OCI-LY7 (cell line): ENCODE measurements at regions of chr9 and their contacts with region 1.

Region 1: GRCh38 chr9:105157130-105157583 is 87.3 kb upstream of the SLC44A1 start:
- DNase-seq: peak; percentile 76
- H3K4me3 ChIP-seq: no peak overlapping the region
- H3K27ac ChIP-seq: no peak overlapping the region
- H3K4me1 ChIP-seq: peaks cover 3% of the 10 kb centered on the region
- CTCF ChIP-seq: peak; percentile 87

Region 2: GRCh38 chr9:104780799-104781395 is 376.3 kb before region 1 on chr9:
- CTCF ChIA-PET with region 1: no interaction called
- POLR2A ChIA-PET with region 1: no interaction called
- intact Hi-C with region 1: loop called (anchors 1 kb)
- DNase-seq: peak; percentile 54
- H3K4me3 ChIP-seq: no peak overlapping the region
- H3K27ac ChIP-seq: no peak overlapping the region
- H3K4me1 ChIP-seq: peaks cover 24% of the 10 kb centered on the region
- CTCF ChIP-seq: peak; percentile 90

Region 3: DNA sequence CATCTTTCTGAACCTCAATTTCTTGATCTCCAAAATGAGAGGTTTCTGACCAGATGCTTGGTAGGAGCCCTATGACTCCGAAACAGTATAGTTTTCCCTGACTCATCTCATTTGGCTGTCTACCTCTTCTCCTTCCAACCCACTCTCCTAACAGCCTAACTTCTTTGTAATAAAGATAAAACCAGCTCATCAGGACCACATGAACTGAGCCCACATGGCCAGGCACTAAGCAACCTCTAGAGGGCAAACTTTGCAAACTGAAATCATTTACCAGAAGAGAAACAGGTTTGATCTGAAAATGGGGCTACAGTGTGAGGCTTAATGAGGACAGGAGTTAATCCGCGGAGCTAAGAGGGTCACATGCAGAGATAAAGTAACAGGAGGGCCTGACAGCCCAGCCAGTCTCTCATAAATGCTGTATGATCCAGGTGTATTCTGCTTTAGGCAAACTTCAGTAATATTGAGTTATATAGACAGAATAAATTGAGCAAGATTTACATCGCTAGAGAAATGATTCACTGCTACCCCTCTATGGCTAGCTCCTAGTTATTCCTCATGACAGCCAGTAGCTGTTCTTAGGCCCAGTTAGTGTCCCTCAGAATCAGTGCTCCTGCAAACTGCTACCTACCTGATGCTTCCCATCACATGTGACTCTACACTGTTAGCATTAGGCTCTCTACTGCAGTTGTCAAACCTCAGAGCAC is 293.8 kb before region 1 on chr9:
- CTCF ChIA-PET with region 1: interaction called, 4 read pairs
- POLR2A ChIA-PET with region 1: interaction called, 5 read pairs
- intact Hi-C with region 1: loop called (anchors 1 kb)
- DNase-seq: peak; percentile 84
- H3K4me3 ChIP-seq: no peak overlapping the region
- H3K27ac ChIP-seq: peak overlapping the region; percentile 18
- H3K4me1 ChIP-seq: peaks cover 29% of the 10 kb centered on the region
- CTCF ChIP-seq: peak; percentile 99

Region 4: GRCh38 chr9:104968025-104968982 is 188.9 kb before region 1 on chr9:
- CTCF ChIA-PET with region 1: no interaction called
- POLR2A ChIA-PET with region 1: no interaction called
- intact Hi-C with region 1: loop called (anchors 2 kb)
- DNase-seq: peak; percentile 90
- H3K4me3 ChIP-seq: peak overlapping the region; percentile 76
- H3K27ac ChIP-seq: no peak overlapping the region
- H3K4me1 ChIP-seq: peaks cover 6% of the 10 kb centered on the region
- CTCF ChIP-seq: no peak

Region 5: DNA sequence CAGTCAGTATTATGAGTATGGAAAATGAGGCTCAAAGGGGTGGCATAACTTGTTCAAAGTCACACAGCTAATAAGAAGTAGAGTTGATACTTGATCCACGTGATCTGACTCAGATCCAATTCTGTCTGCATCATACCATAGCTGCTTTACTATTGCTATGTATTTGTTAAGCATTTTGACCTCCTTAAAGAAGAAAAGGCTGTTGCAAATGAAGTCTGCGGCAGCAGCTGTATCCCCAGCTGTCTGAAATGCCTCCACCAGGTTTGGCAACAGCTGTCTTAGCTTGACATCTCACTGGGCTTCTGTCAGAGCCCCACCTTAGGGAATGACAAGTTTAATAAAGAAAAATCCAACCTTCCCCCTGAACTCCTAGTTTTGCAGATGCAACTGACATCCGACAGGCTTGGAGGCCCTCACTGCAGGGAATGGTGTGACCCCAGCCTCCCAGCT is 11.7 kb after region 1 on chr9:
- CTCF ChIA-PET with region 1: no interaction called
- POLR2A ChIA-PET with region 1: no interaction called
- intact Hi-C with region 1: no loop called
- DNase-seq: no peak
- H3K4me3 ChIP-seq: no peak overlapping the region
- H3K27ac ChIP-seq: no peak overlapping the region
- H3K4me1 ChIP-seq: no peaks in the 10 kb centered on the region
- CTCF ChIP-seq: no peak

Region 6: GRCh38 chr9:105414947-105415661 is 257.9 kb after region 1 on chr9:
- CTCF ChIA-PET with region 1: interaction called, 5 read pairs
- POLR2A ChIA-PET with region 1: interaction called, 4 read pairs
- intact Hi-C with region 1: loop called (anchors 1 kb)
- DNase-seq: peak; percentile 78
- H3K4me3 ChIP-seq: no peak overlapping the region
- H3K27ac ChIP-seq: no peak overlapping the region
- H3K4me1 ChIP-seq: peaks cover 4% of the 10 kb centered on the region
- CTCF ChIP-seq: peak; percentile 99